Esophagus squamous epithelium (tissue), 5 donors: ENCODE measurements at regions of chr19 and their contacts with region 1.

Region 1: DNA sequence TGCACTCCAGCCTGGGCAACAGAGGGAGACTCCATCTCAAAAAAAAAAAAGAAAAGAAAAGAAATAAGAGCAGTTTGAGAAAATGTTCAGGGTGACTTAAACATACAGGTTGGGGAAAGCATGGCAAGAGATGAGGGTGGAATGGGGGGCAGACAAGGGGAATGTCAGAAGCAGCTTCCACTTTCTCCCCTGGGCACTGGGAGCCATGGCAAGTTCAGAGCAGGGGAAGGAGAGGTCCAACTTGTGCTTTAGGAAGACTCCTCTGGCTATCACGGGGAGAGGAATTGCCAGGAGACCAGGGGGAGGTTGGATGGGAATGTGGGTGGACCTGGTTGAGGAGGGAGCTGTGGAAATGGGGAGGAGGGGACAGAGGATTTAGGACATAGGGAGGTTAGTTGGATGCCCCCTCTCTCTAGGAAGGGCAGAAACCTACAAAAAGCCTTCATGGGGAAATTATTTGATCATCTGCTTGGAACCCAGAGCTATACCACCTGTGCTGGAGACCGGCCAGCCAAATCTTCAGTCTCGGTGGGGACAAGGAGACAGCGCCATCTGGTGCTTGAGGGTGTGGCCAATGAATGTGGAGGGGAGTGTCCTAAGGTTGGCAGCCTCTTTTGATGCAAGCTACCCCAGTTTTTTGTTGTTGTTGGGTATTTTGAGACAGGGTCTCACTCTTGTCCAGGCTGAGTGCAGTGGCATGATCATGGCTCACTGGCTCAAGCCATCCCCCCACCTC is 7.3 kb upstream of the STRN4 start:
- DNase-seq: no peak
- H3K4me3 ChIP-seq: no peak overlapping the region
- H3K27ac ChIP-seq: no peak overlapping the region
- H3K4me1 ChIP-seq: peaks cover 7 to 51% (median 16%) of the 10 kb centered on the region in 3 donors
- H3K27me3 ChIP-seq: no peaks in the 10 kb centered on the region
- CTCF ChIP-seq: peak in 5 of 6 experiments; percentile 37 to 58 (median 49)
- POLR2A ChIP-seq: no peak

Region 2: DNA sequence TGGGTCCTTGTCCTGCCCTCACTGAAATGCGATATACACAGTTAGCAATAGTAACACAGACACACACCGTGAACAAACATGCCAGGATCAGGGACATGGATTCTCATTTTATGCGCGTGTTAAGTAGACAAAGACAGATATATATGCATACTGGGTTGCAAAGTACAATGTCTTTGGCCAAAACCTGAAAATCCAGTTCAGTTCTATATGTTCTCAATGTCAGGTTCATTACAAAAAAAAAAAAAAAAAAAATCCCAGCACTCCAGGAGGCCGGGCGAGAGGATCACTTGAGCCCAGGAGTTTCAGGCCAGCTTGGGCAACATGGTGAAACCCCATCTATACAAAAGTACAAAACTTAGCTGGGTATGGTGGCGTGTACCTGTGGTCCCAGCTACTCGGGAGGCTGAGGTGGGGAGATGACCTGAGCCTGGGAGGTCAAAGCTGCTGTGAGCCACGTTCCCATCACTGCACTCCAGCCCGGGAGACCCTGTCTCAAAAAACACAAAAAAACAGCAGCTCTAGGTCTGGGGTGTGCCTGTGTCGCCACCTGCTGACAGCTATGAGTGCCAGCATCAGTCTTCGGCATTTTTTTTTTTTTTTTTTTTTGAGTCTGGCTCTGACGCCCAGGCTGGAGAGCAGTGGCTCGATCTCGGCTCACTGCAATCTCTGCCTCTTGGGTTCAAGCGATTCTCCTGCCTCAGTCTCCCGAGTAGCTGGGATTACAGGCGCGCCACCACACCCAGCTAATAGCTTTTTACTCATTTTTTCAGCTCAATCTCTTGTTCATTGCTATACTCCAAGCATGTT is 86.8 kb after region 1 on chr19:
- intact Hi-C with region 1: loop called (anchors 2 kb)
- DNase-seq: no peak
- H3K4me3 ChIP-seq: no peak overlapping the region
- H3K27ac ChIP-seq: peak overlapping the region; percentile 83 to 91 (median 88)
- H3K4me1 ChIP-seq: peaks cover 13 to 50% (median 17%) of the 10 kb centered on the region in 3 donors
- H3K27me3 ChIP-seq: no peaks in the 10 kb centered on the region
- CTCF ChIP-seq: peak; percentile 52 to 89 (median 84)
- POLR2A ChIP-seq: no peak

Region 3: GRCh38 chr19:46990991-46991676 is 237.5 kb after region 1 on chr19:
- intact Hi-C with region 1: loop called (anchors 10 kb)
- DNase-seq: no peak
- H3K4me3 ChIP-seq: no peak overlapping the region
- H3K27ac ChIP-seq: peak overlapping the region; percentile 7 to 70 (median 55)
- H3K4me1 ChIP-seq: peaks cover 4 to 48% (median 15%) of the 10 kb centered on the region in 3 donors
- H3K27me3 ChIP-seq: no peaks in the 10 kb centered on the region
- CTCF ChIP-seq: peak; percentile 77 to 92 (median 82)
- POLR2A ChIP-seq: no peak